ENCODE measurements at regions of chr6 and their contacts with region 1.

Region 1: GRCh38 chr6:141562851-141563763 is 569.6 kb upstream of the GJE1 start:
- DNase-seq: peak; percentile 85
- H3K4me3 Mint-ChIP-seq: peak overlapping the region; percentile 21
- H3K27ac Mint-ChIP-seq: peak overlapping the region; percentile 74
- H3K4me1 Mint-ChIP-seq: no peaks in the 10 kb centered on the region
- H3K27me3 Mint-ChIP-seq: no peaks in the 10 kb centered on the region
- CTCF ChIP-seq: peak; percentile 85

Region 2: DNA sequence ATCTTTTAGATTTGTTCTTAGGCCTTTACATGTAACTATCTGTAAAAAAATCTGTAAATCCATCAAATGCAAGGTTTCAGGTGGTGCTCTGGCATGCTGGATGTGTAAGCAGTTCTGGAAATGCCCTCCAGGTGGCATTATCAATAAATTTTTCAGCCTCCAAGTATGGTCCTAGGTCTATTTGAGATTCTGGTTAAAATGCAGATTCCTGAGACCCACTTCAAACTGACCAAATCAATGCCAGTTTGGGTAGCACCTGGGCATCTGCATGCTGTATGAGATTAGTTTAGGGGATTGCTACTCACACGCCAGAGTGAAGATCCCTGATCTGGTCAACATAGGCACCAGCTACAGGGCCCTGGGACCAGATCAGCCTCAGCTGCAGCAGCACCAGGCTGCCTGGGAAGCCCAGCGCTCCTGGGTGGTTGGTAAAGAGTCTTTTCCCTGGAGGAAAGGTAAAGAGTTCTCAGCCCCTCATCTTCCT is 1681.3 kb before region 1 on chr6:
- CTCF ChIA-PET with region 1: no interaction called
- POLR2A ChIA-PET with region 1: no interaction called
- intact Hi-C with region 1: loop called (anchors 5 kb)
- DNase-seq: peak; percentile 51
- H3K4me3 Mint-ChIP-seq: no peak overlapping the region
- H3K27ac Mint-ChIP-seq: no peak overlapping the region
- H3K4me1 Mint-ChIP-seq: peaks cover 5% of the 10 kb centered on the region
- H3K27me3 Mint-ChIP-seq: no peaks in the 10 kb centered on the region
- CTCF ChIP-seq: peak; percentile 46

Region 3: GRCh38 chr6:140062043-140063020 is 1500.8 kb before region 1 on chr6:
- CTCF ChIA-PET with region 1: no interaction called
- POLR2A ChIA-PET with region 1: no interaction called
- intact Hi-C with region 1: loop called (anchors 5 kb)
- DNase-seq: peak; percentile 89
- H3K4me3 Mint-ChIP-seq: peak overlapping the region; percentile 59
- H3K27ac Mint-ChIP-seq: peak overlapping the region; percentile 85
- H3K4me1 Mint-ChIP-seq: peaks cover 41% of the 10 kb centered on the region
- H3K27me3 Mint-ChIP-seq: no peaks in the 10 kb centered on the region
- CTCF ChIP-seq: no peak

Region 4: GRCh38 chr6:140441256-140441655 is 1121.9 kb before region 1 on chr6:
- CTCF ChIA-PET with region 1: interaction called, 3 read pairs
- POLR2A ChIA-PET with region 1: no interaction called
- intact Hi-C with region 1: loop called (anchors 5 kb)
- DNase-seq: peak; percentile 40
- H3K4me3 Mint-ChIP-seq: no peak overlapping the region
- H3K27ac Mint-ChIP-seq: no peak overlapping the region
- H3K4me1 Mint-ChIP-seq: peaks cover 19% of the 10 kb centered on the region
- H3K27me3 Mint-ChIP-seq: no peaks in the 10 kb centered on the region
- CTCF ChIP-seq: peak; percentile 45

Region 5: GRCh38 chr6:141017941-141018340 is 545.2 kb before region 1 on chr6:
- CTCF ChIA-PET with region 1: no interaction called
- POLR2A ChIA-PET with region 1: no interaction called
- intact Hi-C with region 1: no loop called
- DNase-seq: no peak
- H3K4me3 Mint-ChIP-seq: no peak overlapping the region
- H3K27ac Mint-ChIP-seq: no peak overlapping the region
- H3K4me1 Mint-ChIP-seq: no peaks in the 10 kb centered on the region
- H3K27me3 Mint-ChIP-seq: no peaks in the 10 kb centered on the region
- CTCF ChIP-seq: no peak

Region 6: DNA sequence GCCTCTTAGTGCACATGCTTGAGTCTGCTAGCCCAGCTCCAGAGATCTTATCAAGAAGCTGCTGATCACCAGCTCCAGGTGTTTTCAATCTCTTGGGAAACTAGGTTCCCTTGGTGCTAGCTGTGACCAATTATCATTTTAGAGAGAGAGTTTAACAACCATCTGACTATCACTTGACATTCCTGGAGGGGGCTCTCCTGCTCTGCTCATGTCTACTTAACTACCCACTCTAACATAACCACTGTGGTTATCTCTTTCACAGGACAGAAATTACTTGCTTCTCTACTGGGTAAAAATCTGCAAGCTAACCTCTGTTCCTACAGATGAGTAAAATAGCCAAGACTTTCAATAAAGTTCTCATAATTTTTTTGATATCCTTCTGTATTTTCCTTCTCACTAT is 253.8 kb before region 1 on chr6:
- CTCF ChIA-PET with region 1: interaction called, 3 read pairs
- POLR2A ChIA-PET with region 1: no interaction called
- intact Hi-C with region 1: loop called (anchors 2 kb)
- DNase-seq: no peak
- H3K4me3 Mint-ChIP-seq: no peak overlapping the region
- H3K27ac Mint-ChIP-seq: no peak overlapping the region
- H3K4me1 Mint-ChIP-seq: peaks cover 3% of the 10 kb centered on the region
- H3K27me3 Mint-ChIP-seq: no peaks in the 10 kb centered on the region
- CTCF ChIP-seq: peak; percentile 27

Region 7: DNA sequence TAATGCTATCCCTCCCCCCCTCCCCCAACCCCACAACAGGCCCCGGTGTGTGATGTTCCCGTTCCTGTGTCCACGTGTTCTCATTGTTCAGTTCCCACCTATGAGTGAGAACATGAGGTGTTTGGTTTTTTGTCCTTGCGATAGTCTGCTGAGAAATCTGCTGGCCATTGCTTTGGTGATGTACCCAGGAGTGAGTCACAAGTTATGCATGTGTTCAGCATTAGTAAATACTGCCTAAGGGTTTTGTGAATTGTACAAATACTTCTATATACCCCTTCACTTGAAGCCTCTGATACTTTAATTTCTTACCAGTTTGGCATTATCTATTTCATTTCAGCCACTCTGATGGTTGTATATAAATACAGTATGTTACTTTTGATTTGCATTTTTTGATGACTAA is 141.7 kb before region 1 on chr6:
- CTCF ChIA-PET with region 1: interaction called, 3 read pairs
- POLR2A ChIA-PET with region 1: interaction called, 3 read pairs
- intact Hi-C with region 1: loop called (anchors 5 kb)
- DNase-seq: peak; percentile 82
- H3K4me3 Mint-ChIP-seq: peak overlapping the region; percentile 75
- H3K27ac Mint-ChIP-seq: peak overlapping the region; percentile 79
- H3K4me1 Mint-ChIP-seq: peaks cover 10% of the 10 kb centered on the region
- H3K27me3 Mint-ChIP-seq: no peaks in the 10 kb centered on the region
- CTCF ChIP-seq: no peak

Region 8: DNA sequence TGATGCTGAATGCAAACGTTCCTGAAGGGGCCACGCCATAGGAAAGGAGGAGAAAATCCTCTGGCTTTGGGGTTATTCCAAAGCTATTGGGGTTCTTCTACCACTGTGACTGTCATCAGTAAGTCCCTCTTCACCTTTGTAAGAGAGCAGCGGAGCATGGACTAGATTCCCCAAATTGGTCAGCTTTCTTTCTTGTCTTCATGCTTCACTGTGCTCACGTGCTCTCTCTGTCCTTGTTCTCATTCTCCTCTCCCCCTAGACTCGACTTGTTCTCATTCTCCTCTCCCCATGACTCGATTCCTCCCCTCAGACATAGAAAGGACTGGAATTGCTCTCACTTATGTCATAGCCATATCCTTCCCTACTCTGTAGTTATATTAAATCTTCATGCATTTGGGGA is 683.9 kb after region 1 on chr6:
- CTCF ChIA-PET with region 1: no interaction called
- POLR2A ChIA-PET with region 1: no interaction called
- intact Hi-C with region 1: no loop called
- DNase-seq: no peak
- H3K4me3 Mint-ChIP-seq: no peak overlapping the region
- H3K27ac Mint-ChIP-seq: no peak overlapping the region
- H3K4me1 Mint-ChIP-seq: no peaks in the 10 kb centered on the region
- H3K27me3 Mint-ChIP-seq: no peaks in the 10 kb centered on the region
- CTCF ChIP-seq: no peak